BJ (cell line): ENCODE measurements at regions of chr10 and their contacts with region 1.

Region 1: DNA sequence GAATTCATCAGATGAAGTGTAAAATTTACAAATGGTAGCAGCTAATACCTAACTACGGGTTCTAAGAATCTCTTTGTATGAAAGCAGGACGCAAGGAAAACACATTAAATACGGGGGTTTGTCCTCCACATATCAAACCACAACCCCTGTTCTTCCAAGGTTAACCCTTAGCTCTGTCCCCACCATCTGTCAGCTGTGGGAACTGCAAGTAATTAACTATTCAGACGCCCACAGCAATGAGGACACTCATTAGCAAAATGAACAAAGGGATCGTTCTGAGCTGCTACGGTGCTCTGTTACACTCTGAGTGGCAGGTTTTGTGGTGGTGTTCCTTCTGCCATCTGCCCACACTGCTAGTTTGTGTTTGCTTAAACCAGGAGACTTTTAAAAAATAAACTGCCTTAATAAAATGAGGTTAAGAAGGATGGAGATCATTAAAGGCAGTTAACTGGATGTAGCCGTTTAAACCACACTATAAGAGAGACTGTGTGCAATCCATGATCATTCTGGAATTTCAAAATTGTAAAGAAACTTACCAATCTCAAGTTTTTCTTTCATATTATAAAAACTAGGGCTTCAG is 51.4 kb downstream of the C10orf67 start:
- DNase-seq: no peak
- H3K4me3 ChIP-seq: no peak overlapping the region
- H3K27me3 ChIP-seq: no peaks in the 10 kb centered on the region; the same call in 1 of the 2 replicates
- CTCF ChIP-seq: peak; percentile 60

Region 2: GRCh38 chr10:23499372-23500132 is 206.3 kb after region 1 on chr10:
- CTCF ChIA-PET with region 1: no interaction called
- POLR2A ChIA-PET with region 1: no interaction called
- DNase-seq: no peak
- H3K4me3 ChIP-seq: no peak overlapping the region
- H3K27me3 ChIP-seq: no peaks in the 10 kb centered on the region
- CTCF ChIP-seq: no peak

Region 3: DNA sequence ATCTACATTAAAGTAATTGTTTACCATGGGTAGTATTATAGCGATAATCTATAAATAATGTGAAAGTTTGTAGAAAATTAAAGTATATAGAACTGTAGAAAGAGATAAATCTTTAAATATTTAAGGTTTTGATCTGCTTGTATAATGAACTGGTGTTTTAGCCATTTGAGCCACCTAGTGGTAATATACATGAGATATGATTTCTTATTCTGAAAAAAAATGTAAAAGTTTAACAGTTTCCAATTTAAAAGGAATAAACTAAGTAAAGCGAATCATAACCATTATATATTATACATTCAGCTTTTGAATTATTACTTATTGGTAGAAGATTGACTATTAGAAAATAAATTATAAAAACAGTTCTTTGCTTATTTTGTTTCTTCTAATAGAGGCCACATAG is 236.8 kb after region 1 on chr10:
- CTCF ChIA-PET with region 1: interaction called, 17 read pairs
- POLR2A ChIA-PET with region 1: no interaction called
- DNase-seq: no peak
- H3K4me3 ChIP-seq: no peak overlapping the region
- H3K27me3 ChIP-seq: no peaks in the 10 kb centered on the region
- CTCF ChIP-seq: peak; percentile 22; the same call in 1 of the 2 replicates